Natural killer cell (primary cell): ENCODE measurements at regions of chr3 and their contacts with region 1.

Region 1: GRCh38 chr3:128153156-128154041 is at the start of gene EEFSEC:
- DNase-seq: peak; percentile 86 to 88
- ATAC-seq: peak; percentile 93 to 96 (median 95)
- H3K4me3 ChIP-seq: peak within 1 kb of the TSS; percentile 54
- H3K4me3 Mint-ChIP-seq: peak within 1 kb of the TSS; percentile 86
- H3K27ac ChIP-seq: peak within 1 kb of the TSS; percentile 76
- H3K27ac Mint-ChIP-seq: peak within 1 kb of the TSS; percentile 82 to 86
- H3K4me1 ChIP-seq: peaks cover 16% of the 10 kb centered on the region
- H3K4me1 Mint-ChIP-seq: peaks cover 20 to 25% of the 10 kb centered on the region in 2 donors
- H3K27me3 ChIP-seq: no peaks in the 10 kb centered on the region
- H3K27me3 Mint-ChIP-seq: no peaks in the 10 kb centered on the region
- CTCF ChIP-seq: no peak
- total RNA-seq, gene EEFSEC: 16.7 to 18.9 (median 17.6) TPM

Region 2: DNA sequence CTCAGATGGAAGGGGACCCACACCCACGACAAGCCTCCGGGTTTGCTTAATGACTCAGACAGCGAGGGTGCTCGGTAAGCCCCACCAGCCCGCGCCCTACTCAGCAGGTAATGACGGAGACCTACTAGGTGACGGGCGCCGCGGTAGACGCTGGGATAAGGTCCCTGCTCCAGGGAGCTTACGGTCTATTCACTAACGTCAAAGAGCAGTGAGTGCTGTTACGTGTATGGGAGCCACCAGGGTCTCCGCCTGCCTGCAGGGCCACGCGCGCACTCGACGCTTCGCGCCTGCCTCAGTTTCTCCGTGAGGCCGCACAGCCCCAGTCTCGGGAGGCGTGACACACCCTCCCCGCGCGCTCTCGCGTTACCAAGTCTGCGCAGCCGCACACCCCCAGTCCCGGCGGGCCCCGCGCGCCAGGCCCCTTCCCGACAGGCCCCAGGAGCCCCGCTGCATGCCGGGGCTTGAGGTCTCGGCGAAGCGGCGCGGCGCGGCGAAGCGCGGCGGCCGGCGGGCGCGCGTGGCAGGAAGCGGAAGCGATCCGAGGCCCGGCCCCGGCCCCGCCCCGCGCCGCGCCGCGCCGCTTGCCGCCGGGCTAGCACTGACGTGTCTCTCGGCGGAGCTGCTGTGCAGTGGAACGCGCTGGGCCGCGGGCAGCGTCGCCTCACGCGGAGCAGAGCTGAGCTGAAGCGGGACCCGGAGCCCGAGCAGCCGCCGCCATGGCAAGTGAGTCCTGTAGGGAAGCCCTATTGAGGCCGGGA is 101.4 kb before region 1 on chr3 and contains the start of gene SEC61A1:
- intact Hi-C with region 1: loop called (anchors 5 kb)
- DNase-seq: peak; percentile 94 to 96
- ATAC-seq: peak; percentile 93 to 99 (median 94)
- H3K4me3 ChIP-seq: peak within 1 kb of the TSS; percentile 98
- H3K4me3 Mint-ChIP-seq: peak within 1 kb of the TSS; percentile 98
- H3K27ac ChIP-seq: peak within 1 kb of the TSS; percentile 84
- H3K27ac Mint-ChIP-seq: peak within 1 kb of the TSS; percentile 93 to 96
- H3K4me1 ChIP-seq: peaks cover 19% of the 10 kb centered on the region
- H3K4me1 Mint-ChIP-seq: peaks cover 45 to 48% of the 10 kb centered on the region in 2 donors
- H3K27me3 ChIP-seq: no peaks in the 10 kb centered on the region
- H3K27me3 Mint-ChIP-seq: peaks cover 2 to 4% of the 10 kb centered on the region in 2 donors
- CTCF ChIP-seq: no peak
- total RNA-seq, gene SEC61A1: 143 to 172 (median 148) TPM

Region 3: GRCh38 chr3:128123538-128124368 is 29.6 kb before region 1 on chr3 and contains the start of gene RUVBL1:
- intact Hi-C with region 1: loop called (anchors 1 kb)
- DNase-seq: peak; percentile 92 to 98
- ATAC-seq: peak; percentile 96 to 98 (median 97)
- H3K4me3 ChIP-seq: peak within 1 kb of the TSS; percentile 84
- H3K4me3 Mint-ChIP-seq: peak within 1 kb of the TSS; percentile 99
- H3K27ac ChIP-seq: peak within 1 kb of the TSS; percentile 80
- H3K27ac Mint-ChIP-seq: peak within 1 kb of the TSS; percentile 95 to 96
- H3K4me1 ChIP-seq: peaks cover 17% of the 10 kb centered on the region
- H3K4me1 Mint-ChIP-seq: peaks cover 20 to 29% of the 10 kb centered on the region in 2 donors
- H3K27me3 ChIP-seq: no peaks in the 10 kb centered on the region
- H3K27me3 Mint-ChIP-seq: no peaks in the 10 kb centered on the region
- CTCF ChIP-seq: no peak
- total RNA-seq, gene RUVBL1: 11.9 to 18.5 (median 14.1) TPM